Activated CD4-positive, alpha-beta T cell treated with anti-CD3 and anti-CD28 coated beads for 36 hours (primary cell): ENCODE measurements at regions of chr22 and their contacts with region 1.

Region 1: DNA sequence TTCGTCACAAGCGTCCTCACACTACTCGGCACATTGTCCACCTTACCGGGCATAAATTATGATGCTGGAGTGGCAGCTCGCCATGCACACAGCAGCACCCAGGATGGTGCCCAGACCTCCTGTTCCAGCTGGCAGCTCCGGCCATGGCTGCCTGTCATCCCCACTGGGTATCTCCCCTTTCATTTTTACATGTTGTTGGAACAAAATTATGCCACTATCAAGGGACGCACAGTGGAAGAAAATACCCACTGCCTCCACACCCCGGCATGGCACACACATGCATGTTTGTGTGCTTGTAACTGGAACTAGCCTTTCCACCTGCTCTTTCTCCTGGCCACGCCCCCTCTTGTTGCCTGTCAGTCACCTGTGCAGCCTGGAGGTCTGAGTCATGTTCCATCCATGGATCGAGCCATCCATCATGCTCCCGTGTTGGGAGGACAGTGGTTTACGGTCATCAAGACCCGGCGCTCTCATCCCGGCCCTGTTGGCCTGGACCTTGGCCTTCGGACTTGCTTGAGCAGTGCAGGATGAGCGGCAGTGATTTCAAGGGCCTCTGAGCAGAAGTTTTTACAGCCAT is 1069.6 kb downstream of the BRD1 start:
- DNase-seq: no peak
- ATAC-seq: no peak
- H3K4me3 Mint-ChIP-seq: no peak overlapping the region
- H3K27ac Mint-ChIP-seq: no peak overlapping the region
- H3K4me1 Mint-ChIP-seq: no peaks in the 10 kb centered on the region
- H3K27me3 Mint-ChIP-seq: peaks cover 9% of the 10 kb centered on the region

Region 2: GRCh38 chr22:48800036-48800885 is 42.2 kb after region 1 on chr22:
- CTCF ChIA-PET with region 1: no interaction called
- POLR2A ChIA-PET with region 1: no interaction called
- intact Hi-C with region 1: loop called in 1 of 2 experiments (anchors 2 kb)
- DNase-seq: no peak
- ATAC-seq: no peak
- H3K4me3 Mint-ChIP-seq: no peak overlapping the region
- H3K27ac Mint-ChIP-seq: no peak overlapping the region
- H3K4me1 Mint-ChIP-seq: no peaks in the 10 kb centered on the region
- H3K27me3 Mint-ChIP-seq: peaks cover 3% of the 10 kb centered on the region